Heart left ventricle (tissue), 16 donors: ENCODE measurements at regions of chr20 and their contacts with region 1.

Region 1: GRCh38 chr20:48787861-48788375 is 39.9 kb downstream of the PREX1 start:
- DNase-seq: no peak
- ATAC-seq: peak in 1 of 4 donors; percentile 20
- H3K4me3 ChIP-seq: no peak overlapping the region
- H3K27ac ChIP-seq: peak overlapping the region in 1 of 12 donors; percentile 82
- H3K4me1 ChIP-seq: peaks cover 0 to 92% (median 15%) of the 10 kb centered on the region in 12 donors
- H3K27me3 ChIP-seq: no peaks in the 10 kb centered on the region
- CTCF ChIP-seq: no peak
- POLR2A ChIP-seq: no peak

Region 2: GRCh38 chr20:48709744-48710695 is 77.9 kb before region 1 on chr20:
- intact Hi-C with region 1: loop called in 1 of 10 experiments (anchors 5 kb)
- DNase-seq: no peak
- ATAC-seq: no peak
- H3K4me3 ChIP-seq: no peak overlapping the region
- H3K27ac ChIP-seq: no peak overlapping the region
- H3K4me1 ChIP-seq: peaks cover 0 to 71% (median 12%) of the 10 kb centered on the region in 12 donors
- H3K27me3 ChIP-seq: no peaks in the 10 kb centered on the region
- CTCF ChIP-seq: no peak
- POLR2A ChIP-seq: no peak

Region 3: GRCh38 chr20:48769069-48769879 is 18.6 kb before region 1 on chr20:
- intact Hi-C with region 1: no loop called
- DNase-seq: no peak
- ATAC-seq: peak in 1 of 4 donors; percentile 54
- H3K4me3 ChIP-seq: no peak overlapping the region
- H3K27ac ChIP-seq: peak overlapping the region in 1 of 12 donors; percentile 58
- H3K4me1 ChIP-seq: peaks cover 0 to 91% (median 8%) of the 10 kb centered on the region in 12 donors
- H3K27me3 ChIP-seq: no peaks in the 10 kb centered on the region
- CTCF ChIP-seq: no peak
- POLR2A ChIP-seq: no peak

Region 4: GRCh38 chr20:48828022-48828743 is 40.3 kb after region 1 on chr20:
- intact Hi-C with region 1: no loop called
- DNase-seq: peak; percentile 81 to 91 (median 86)
- ATAC-seq: peak; percentile 6 to 83 (median 73)
- H3K4me3 ChIP-seq: peak overlapping the region; percentile 45 to 89 (median 66)
- H3K27ac ChIP-seq: peak overlapping the region; percentile 19 to 92 (median 67)
- H3K4me1 ChIP-seq: peaks cover 0 to 69% (median 22%) of the 10 kb centered on the region in 12 donors
- H3K27me3 ChIP-seq: no peaks in the 10 kb centered on the region
- CTCF ChIP-seq: peak in 5 of 12 donors; percentile 12 to 30 (median 22)
- POLR2A ChIP-seq: peak in 1 of 2 donors; percentile 59

Region 5: DNA sequence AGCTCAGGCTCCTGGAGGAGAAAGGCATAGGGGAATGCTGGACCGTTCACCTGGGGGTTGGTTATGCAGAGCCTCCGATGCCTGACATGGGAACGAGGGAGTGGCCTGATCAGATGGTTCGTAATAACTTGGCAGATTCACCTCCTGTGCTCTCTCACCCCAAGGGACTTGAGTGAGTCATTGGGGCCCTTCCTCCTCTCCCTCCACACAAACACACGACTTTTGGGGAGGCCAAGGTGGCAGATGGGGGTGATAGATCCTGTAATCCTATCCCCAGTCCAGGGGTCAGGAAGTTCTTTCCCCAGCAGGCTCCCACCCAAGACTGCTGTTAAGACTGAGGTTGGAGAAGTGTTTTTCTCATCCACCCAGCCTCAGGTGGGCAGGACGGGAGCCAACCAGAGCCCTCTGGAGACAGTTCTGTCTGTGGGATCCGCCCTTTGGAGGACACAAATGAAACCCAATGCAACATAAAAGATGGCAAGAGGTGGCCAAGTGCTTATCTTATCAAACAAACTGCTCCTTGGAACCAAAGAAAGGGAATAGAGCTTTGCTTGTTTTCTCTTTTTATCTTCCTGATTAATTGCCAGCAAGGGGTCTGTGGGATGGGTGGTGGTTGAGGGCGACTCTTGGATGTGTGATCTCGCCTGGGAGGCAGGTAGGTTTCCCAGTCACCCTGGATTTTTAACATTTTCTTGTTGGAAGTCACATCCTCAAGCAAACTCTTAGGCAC is 88.2 kb after region 1 on chr20:
- intact Hi-C with region 1: no loop called
- DNase-seq: no peak
- ATAC-seq: no peak
- H3K4me3 ChIP-seq: no peak overlapping the region
- H3K27ac ChIP-seq: no peak overlapping the region
- H3K4me1 ChIP-seq: peaks cover 0 to 53% (median 0%) of the 10 kb centered on the region in 12 donors
- H3K27me3 ChIP-seq: no peaks in the 10 kb centered on the region
- CTCF ChIP-seq: no peak
- POLR2A ChIP-seq: no peak